ENCODE measurements at regions of chr9 and their contacts with region 1.

Region 1: GRCh38 chr9:76756268-76756640 is 8.0 kb upstream of the PCA3 start:
- ATAC-seq: peak; percentile 46 to 99 (median 94)
- H3K4me3 ChIP-seq: no peak overlapping the region
- H3K27ac ChIP-seq: peak overlapping the region in 1 of 2 donors; percentile 33
- H3K4me1 ChIP-seq: peaks cover 14 to 16% of the 10 kb centered on the region in 2 donors

Region 2: GRCh38 chr9:76490249-76490990 is 265.8 kb before region 1 on chr9:
- in situ Hi-C with region 1: no loop called
- ATAC-seq: no peak
- H3K4me3 ChIP-seq: no peak overlapping the region
- H3K27ac ChIP-seq: no peak overlapping the region
- H3K4me1 ChIP-seq: no peaks in the 10 kb centered on the region

Region 3: GRCh38 chr9:76610011-76610352 is 146.3 kb before region 1 on chr9:
- in situ Hi-C with region 1: no loop called
- ATAC-seq: peak in 7 of 8 experiments; percentile 64 to 100 (median 100)
- H3K4me3 ChIP-seq: no peak overlapping the region
- H3K27ac ChIP-seq: peak overlapping the region in 1 of 2 donors; percentile 23
- H3K4me1 ChIP-seq: peaks cover 17 to 20% of the 10 kb centered on the region in 2 donors

Region 4: DNA sequence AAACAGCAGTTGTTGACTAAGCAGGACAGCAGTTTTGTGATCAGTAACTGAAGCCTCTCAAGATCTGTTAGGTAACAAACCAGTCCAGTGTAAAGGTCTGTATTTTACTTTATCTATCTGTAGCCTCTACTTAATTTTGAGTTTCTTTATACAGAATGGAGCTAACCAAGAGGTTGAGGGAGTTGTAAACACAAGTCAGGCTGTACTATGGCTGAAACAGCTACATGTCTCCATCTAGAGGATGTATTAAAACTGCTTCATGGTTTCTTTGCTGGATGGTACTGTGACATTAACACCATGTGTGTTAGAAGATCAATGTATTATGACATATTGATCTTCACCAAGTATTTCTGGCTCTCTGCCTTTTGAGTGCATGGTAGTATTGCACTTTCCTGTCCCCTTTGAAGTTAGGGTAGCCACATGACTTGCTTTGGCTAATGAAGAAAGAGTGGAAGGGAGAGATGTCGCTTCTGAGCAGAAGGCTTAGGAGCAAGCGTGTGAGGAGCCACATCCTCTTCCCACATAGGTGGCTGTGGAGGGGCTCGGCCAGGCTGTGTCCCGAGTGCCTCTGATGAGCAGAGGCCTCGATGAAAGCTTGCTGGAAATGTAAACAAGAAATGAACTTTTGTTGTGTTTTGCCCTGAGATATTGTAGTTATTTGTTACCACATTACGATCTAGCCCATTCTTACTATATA is 97.6 kb before region 1 on chr9:
- in situ Hi-C with region 1: loop called in 1 of 9 experiments (anchors 25 kb)
- ATAC-seq: peak in 6 of 8 experiments; percentile 44 to 94 (median 86)
- H3K4me3 ChIP-seq: no peak overlapping the region
- H3K27ac ChIP-seq: no peak overlapping the region
- H3K4me1 ChIP-seq: no peaks in the 10 kb centered on the region

Region 5: DNA sequence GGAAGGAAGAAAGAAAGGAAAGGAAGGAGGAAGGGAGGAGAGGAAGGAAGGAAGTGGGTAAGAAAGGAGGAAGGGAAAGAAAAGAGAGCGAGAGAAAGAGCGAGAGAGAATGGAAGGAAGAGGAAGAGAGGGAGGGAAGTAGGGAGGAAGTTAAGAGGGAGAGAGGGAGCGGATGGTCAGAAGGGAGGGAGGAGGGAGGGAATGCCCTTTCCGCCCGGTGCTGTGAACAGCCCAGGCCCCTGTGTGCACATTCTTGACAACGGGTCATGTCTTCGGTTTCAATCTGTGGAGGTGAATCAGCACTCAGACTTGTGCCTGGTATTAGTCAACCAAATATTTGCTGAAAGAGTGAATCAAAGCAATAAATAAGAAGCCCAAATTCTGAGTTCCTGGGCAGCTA is 110.4 kb after region 1 on chr9:
- in situ Hi-C with region 1: loop called in 1 of 9 experiments (anchors 25 kb)
- ATAC-seq: peak in 2 of 8 experiments; percentile 23 to 36
- H3K4me3 ChIP-seq: no peak overlapping the region
- H3K27ac ChIP-seq: no peak overlapping the region
- H3K4me1 ChIP-seq: peaks cover 6 to 7% of the 10 kb centered on the region in 2 donors

Region 6: DNA sequence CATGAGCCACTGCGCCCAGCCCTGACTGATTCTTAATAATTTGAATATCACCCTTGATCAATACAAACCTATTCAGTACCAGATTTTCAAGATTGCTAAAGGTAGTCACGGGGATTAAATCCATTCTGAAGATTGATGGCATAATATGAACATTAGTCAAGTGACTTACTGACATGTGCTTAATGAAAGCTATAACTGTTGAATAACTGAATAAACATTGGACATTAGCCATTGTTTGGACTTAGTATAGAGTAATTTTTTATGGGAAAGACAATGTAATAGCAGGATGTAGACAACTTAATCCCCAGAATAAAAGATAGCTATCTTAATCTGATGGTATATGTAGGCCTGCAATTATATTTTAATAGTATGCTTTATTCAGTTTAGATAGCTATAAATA is 386.1 kb after region 1 on chr9:
- in situ Hi-C with region 1: no loop called
- ATAC-seq: peak in 1 of 8 experiments; percentile 52
- H3K4me3 ChIP-seq: no peak overlapping the region
- H3K27ac ChIP-seq: no peak overlapping the region
- H3K4me1 ChIP-seq: no peaks in the 10 kb centered on the region